ENCODE measurements at regions of chr4 and their contacts with region 1.

Region 1: GRCh38 chr4:155866177-155866576 is at the start of gene ASIC5:
- DNase-seq: no peak
- ATAC-seq: no peak
- H3K4me3 ChIP-seq: no peak within 1 kb of the TSS
- H3K27ac ChIP-seq: no peak within 1 kb of the TSS
- H3K4me1 ChIP-seq: no peaks in the 10 kb centered on the region
- H3K27me3 ChIP-seq: no peaks in the 10 kb centered on the region
- CTCF ChIP-seq: no peak
- EP300 ChIP-seq: no peak
- POLR2A ChIP-seq: no peak
- RAD21 ChIP-seq: no peak
- polyA plus RNA-seq, gene ASIC5: not detected

Region 2: DNA sequence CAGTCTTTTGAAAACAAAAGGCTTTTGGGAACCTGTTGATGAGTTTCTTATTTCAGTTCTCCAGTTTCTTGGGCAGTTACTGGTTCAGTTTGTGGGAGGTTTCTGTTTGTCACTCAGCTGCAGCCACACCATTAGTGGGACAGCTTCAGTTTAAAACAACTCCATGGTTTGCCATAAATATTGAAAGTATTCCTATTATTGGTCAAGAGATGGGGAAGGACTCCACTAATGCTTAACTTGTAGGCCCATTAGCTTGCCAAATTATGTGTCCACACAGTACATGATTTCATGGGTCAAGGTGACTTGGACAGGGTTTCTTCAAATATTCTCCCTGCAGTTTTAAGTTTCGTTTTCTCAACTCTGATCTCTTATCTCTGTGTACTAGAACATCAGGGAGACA is 15.4 kb after region 1 on chr4:
- CTCF ChIA-PET with region 1: interaction called, 4 read pairs
- POLR2A ChIA-PET with region 1: no interaction called
- RAD21 ChIA-PET with region 1: no interaction called
- SMC1A ChIA-PET with region 1: interaction called, 12 read pairs
- in situ Hi-C with region 1: no loop called
- intact Hi-C with region 1: no loop called
- DNase-seq: peak; percentile 30
- ATAC-seq: peak; percentile 76
- H3K4me3 ChIP-seq: no peak overlapping the region
- H3K27ac ChIP-seq: no peak overlapping the region
- H3K4me1 ChIP-seq: no peaks in the 10 kb centered on the region
- H3K27me3 ChIP-seq: no peaks in the 10 kb centered on the region
- CTCF ChIP-seq: no peak
- EP300 ChIP-seq: no peak
- POLR2A ChIP-seq: no peak
- RAD21 ChIP-seq: no peak

Region 3: DNA sequence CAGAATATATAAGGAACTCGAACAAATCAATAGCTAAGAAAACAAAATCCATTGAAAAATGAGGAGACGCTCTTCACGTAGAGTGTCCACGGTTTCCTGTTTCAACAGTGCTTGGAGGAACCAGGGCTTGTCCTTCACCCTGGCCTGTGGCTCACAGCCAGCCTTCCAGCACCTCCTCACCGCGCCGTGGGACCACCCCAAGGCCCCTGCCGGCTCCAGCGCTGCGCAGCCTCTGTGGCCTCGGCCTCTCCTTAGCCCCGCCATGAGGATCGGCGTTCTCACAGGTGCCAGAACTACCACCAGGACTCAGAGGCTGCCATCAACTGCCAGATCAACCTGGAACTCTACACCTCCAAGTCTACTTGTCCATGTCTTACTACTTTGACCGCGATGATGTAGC is 140.0 kb after region 1 on chr4:
- CTCF ChIA-PET with region 1: no interaction called
- POLR2A ChIA-PET with region 1: no interaction called
- RAD21 ChIA-PET with region 1: no interaction called
- SMC1A ChIA-PET with region 1: no interaction called
- in situ Hi-C with region 1: no loop called
- intact Hi-C with region 1: no loop called
- DNase-seq: no peak
- ATAC-seq: no peak
- H3K4me3 ChIP-seq: no peak overlapping the region
- H3K27ac ChIP-seq: no peak overlapping the region
- H3K4me1 ChIP-seq: no peaks in the 10 kb centered on the region
- H3K27me3 ChIP-seq: no peaks in the 10 kb centered on the region
- CTCF ChIP-seq: no peak
- EP300 ChIP-seq: no peak
- POLR2A ChIP-seq: no peak
- RAD21 ChIP-seq: no peak